GM10248 (cell line): ENCODE measurements at regions of chr12 and their contacts with region 1.

Region 1: DNA sequence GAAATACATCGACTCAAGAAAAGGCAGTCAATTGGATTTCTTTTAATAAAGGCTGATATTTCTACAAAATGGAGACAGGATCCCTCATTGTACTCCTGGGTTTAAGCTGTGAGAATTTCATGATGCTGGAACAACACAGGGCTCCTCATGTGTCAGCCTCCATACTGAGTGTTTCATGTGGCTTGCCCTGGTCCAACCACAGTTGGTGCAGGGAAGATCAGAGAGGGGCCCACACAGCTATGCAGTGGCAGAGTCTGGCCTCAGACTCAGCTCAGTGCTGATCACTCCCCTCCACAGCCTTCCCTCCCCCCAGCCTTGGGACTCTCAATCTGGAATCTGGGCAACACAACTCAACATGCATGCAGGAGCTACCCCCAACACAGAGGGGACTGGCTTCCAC is 122.5 kb upstream of the OVCH1 start:
- DNase-seq: no peak
- CTCF ChIP-seq: no peak

Region 2: DNA sequence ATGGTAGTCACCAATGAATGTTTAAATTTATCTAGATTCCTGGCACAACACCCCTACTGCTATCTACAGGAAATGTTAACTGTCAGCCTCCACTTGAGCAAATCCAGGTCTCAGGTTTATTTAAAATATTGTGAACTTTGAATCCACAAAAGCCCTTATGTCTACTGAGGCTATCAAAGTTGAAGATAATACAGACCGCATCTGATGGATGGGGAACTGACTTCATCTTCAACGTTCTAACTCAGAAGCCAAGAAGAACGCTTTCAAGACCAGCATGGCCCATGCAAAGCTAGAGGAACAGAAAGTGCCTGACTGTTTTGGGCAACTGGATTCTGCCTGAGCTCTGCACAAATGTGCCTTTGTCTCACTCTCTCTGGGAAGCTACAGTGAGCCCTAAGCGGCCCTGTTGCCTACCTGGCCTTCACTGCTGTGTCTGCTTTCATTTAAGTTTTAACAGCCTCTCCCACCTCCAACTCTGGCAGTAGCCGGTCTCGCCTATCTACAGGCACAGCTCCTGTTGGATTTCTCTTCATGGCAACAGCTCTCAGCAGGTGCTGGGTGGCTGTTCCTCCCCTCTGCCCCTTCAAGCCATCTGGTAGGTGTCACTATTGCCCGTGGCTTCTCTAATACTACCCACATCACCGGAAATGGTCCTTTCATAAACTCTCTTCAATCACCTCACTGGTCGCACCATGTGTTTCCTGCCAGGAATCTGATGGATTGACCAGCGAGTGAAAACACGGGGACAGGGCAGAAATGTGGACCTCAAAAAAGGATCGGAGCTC is 10.4 kb before region 1 on chr12:
- CTCF ChIA-PET with region 1: interaction called, 10 read pairs
- POLR2A ChIA-PET with region 1: no interaction called
- DNase-seq: no peak
- CTCF ChIP-seq: no peak